Activated CD4-positive, alpha-beta memory T cell treated with anti-CD3 and anti-CD28 coated beads, Interleukin-2, amount 10 ng/mL, durations not matched to agents 7 days and 5 days (primary cell): ENCODE measurements at regions of chr6 and their contacts with region 1.

Region 1: DNA sequence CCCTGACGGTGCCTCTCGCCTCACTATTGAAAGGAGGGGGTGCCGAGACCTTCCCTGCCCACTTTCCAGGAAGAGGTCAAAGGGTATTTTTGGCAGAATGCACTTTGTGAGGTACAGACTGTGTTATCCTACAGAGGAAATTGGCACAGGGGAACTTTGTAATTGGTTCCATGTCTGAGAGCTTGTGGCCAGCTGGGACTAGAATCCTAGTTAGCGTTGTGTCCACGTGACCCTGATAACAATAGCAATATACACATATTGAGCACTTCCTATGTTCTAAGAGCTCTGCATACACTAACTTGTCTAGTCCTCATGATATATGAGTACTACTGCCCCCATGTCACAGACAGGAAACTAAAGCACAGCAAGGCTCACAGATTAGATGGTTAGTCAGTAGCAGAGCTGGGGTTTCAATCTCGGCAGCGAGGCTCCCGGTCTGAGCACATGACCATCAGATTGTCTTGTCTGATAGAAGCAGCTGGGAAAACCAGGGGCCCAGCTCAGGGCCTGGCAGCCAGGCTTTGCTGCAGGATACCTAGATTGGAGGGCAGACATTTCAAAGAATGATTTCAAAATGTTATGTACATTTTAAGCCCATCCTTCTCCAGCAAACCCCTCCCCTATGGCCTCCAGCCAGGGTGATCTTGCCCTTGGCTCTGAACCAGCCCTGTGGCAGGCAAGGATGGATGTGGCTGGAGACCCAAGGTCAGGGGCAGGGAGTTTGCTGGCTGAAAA is 1.4 kb downstream of the MAPK13 start:
- DNase-seq: peak; percentile 66
- H3K4me3 Mint-ChIP-seq: peak overlapping the region; percentile 86
- H3K27ac Mint-ChIP-seq: peak overlapping the region; percentile 93
- H3K4me1 Mint-ChIP-seq: peaks cover 45% of the 10 kb centered on the region
- H3K27me3 Mint-ChIP-seq: no peaks in the 10 kb centered on the region

Region 2: GRCh38 chr6:36113049-36113448 is 18.6 kb before region 1 on chr6:
- CTCF ChIA-PET with region 1: interaction called, 7 read pairs
- POLR2A ChIA-PET with region 1: interaction called, 148 read pairs
- DNase-seq: no peak
- H3K4me3 Mint-ChIP-seq: no peak overlapping the region
- H3K27ac Mint-ChIP-seq: peak overlapping the region; percentile 99
- H3K4me1 Mint-ChIP-seq: peaks cover 79% of the 10 kb centered on the region
- H3K27me3 Mint-ChIP-seq: no peaks in the 10 kb centered on the region

Region 3: GRCh38 chr6:36196880-36197548 is 65.3 kb after region 1 on chr6:
- CTCF ChIA-PET with region 1: interaction called, 4 read pairs
- POLR2A ChIA-PET with region 1: interaction called, 24 read pairs
- DNase-seq: peak; percentile 99
- H3K4me3 Mint-ChIP-seq: peak overlapping the region; percentile 85
- H3K27ac Mint-ChIP-seq: peak overlapping the region; percentile 87
- H3K4me1 Mint-ChIP-seq: peaks cover 33% of the 10 kb centered on the region
- H3K27me3 Mint-ChIP-seq: peaks cover 7% of the 10 kb centered on the region